HEK293 (cell line): ENCODE measurements at regions of chr1 and their contacts with region 1.

Region 1: DNA sequence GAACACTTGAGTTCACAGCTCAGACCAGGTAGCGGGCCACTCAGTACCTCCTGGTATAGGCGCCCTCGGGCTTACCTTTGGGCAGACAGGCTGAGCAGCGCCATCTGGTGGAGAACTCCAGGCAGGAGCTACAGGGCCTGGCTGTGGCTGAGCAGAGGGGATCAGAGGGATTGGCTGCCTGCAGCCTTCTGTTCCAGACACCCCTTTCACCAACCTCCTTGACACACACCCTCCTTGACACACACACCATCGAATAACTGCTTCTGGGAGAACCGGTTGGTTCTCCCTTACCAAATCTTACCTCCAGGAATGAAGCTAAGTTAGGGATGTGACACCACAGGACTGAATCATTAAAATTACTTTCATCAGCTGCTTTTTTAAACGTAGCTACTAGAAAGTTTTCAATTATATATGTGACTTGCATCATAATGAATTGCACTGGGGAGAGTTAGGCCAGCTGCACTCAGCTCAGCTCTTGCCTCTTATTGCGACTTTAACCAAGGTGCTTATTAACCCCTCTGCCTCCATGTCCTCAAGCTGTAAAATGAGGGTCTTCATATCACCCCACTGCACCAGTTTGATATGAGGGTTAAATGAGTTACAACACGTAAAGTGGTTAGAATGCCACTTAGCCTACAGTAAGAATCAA is 6.6 kb downstream of the LIN28A start:
- H3K4me3 ChIP-seq: no peak overlapping the region
- H3K27ac ChIP-seq: no peak overlapping the region
- H3K4me1 ChIP-seq: no peaks in the 10 kb centered on the region
- CTCF ChIP-seq: peak; percentile 70

Region 2: DNA sequence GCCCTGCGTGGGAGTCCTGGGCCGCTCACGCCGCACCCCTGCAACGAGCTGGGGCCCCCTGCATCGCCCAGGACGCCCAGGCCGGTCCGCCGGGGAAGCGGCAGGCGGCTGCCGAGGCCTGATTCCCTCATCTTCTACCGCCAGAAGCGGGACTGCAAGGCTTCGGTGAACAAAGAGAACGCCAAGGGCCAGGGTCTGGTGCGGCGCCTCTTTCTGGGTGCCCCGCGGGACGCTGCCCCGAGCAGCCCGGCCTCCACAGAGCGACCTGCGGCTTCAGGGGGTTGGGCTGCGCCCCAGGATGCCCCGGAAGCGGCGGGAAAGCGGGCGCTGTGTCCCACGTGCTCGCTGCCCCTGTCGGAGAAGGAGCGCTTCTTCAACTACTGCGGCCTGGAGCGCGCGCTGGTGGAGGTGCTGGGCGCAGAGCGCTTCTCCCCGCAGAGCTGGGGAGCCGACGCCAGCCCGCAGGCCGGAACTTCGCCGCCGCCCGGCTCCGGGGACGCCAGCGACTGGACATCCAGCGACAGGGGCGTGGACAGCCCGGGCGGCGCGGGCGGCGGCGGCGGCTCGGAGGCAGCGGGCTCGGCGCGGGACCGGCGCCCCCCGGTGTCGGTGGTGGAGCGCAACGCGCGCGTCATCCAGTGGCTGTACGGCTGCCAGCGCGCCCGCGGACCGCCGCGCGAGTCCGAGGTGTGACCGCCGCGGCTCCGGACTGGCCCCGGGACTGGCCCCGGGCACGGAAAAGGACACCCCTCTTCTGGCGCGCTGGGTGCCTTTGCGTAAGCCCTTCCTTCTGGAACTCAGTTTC is 255.6 kb before region 1 on chr1:
- CTCF ChIA-PET with region 1: no interaction called
- POLR2A ChIA-PET with region 1: no interaction called
- H3K4me3 ChIP-seq: peak overlapping the region; percentile 12; the same call in 1 of the 2 replicates
- H3K27ac ChIP-seq: peak overlapping the region; percentile 45; the same call in 1 of the 2 replicates
- H3K4me1 ChIP-seq: no peaks in the 10 kb centered on the region; the same call in 1 of the 2 replicates
- CTCF ChIP-seq: no peak

Region 3: GRCh38 chr1:26284597-26285360 is 132.5 kb before region 1 on chr1:
- CTCF ChIA-PET with region 1: interaction called, 42 read pairs
- POLR2A ChIA-PET with region 1: interaction called, 4 read pairs
- H3K4me3 ChIP-seq: no peak overlapping the region
- H3K27ac ChIP-seq: no peak overlapping the region
- H3K4me1 ChIP-seq: no peaks in the 10 kb centered on the region
- CTCF ChIP-seq: peak; percentile 70

Region 4: DNA sequence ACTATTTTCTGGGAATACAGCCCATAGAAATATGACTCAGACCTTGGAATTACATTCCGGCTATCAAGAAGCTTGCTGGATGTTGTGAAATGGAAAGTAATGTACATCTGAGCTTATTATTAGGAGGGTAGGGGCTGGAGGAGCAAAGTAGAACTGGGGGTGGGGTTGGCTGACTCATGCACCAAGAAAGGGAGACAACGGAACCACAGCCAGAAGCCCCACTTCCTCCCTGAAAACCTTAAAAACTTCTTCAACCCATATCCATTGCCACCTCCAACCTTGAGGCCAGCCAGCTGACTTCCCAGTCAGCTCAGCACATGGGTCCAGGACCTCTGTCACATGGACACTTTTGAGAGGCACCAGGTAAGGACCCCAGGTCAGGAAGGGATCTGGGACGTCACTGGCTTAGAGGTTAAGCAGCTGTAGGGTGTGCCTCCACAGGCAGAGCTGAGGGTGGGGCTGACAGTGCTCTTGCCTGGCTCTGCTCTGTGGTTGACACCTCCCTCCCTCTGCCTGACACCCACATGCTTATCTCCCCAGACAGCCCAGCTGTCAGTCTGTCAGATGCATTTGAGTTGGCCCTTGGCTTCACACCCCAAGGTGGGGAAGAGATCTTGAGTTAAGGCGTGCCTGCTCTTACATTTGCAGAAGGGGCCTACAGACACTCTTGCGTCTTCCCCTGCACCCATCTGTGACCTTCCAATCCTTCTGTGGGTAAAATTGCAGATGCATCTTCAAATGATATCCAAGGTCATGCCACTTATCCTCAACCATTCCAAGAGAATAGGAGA is 39.0 kb before region 1 on chr1:
- CTCF ChIA-PET with region 1: interaction called, 24 read pairs
- POLR2A ChIA-PET with region 1: no interaction called
- H3K4me3 ChIP-seq: no peak overlapping the region
- H3K27ac ChIP-seq: no peak overlapping the region
- H3K4me1 ChIP-seq: no peaks in the 10 kb centered on the region
- CTCF ChIP-seq: no peak

Region 5: GRCh38 chr1:26431979-26432695 is 14.9 kb after region 1 on chr1 and contains the start of gene DHDDS:
- CTCF ChIA-PET with region 1: interaction called, 53 read pairs
- POLR2A ChIA-PET with region 1: interaction called, 8 read pairs
- H3K4me3 ChIP-seq: peak within 1 kb of the TSS; percentile 64
- H3K27ac ChIP-seq: peak within 1 kb of the TSS; percentile 1; the same call in 1 of the 2 replicates
- H3K4me1 ChIP-seq: peaks cover 5% of the 10 kb centered on the region
- CTCF ChIP-seq: no peak

Region 6: DNA sequence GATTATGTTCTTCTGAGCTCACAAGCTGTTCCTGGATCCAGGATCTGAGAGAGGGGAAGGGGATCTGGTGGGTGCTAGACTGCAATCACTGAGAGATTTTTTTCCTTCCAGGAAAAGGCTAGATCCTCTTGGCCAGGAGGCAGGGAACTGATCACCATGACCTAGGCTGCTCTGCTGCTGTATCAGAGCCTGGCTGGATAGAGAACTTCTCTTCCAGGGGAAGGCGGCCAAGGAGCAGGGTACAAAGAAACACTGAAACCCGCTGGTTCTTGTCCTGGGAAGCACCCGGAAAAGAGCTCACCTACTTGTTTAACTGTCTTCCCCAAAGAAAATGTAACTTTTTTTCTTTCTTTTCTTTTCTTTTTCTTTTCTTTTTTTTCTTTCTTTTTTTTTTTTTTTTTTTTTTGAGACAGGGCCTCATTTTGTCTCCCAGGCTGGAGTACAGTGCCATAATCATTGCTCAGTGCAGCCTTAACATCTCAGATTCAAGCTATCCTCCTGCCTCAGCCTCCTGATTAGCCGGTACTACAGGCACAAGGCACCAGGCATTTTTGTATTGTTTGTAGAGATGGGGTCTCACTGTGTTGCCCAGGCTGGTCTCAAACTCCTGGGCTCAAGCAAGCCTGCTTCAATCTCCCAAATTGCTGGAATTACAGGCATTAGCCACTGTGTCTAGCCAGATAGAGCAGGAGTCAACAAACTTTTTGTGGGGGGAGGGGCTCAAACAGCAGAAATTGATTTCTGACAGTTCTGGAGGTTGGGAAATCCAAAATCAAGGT is 99.9 kb after region 1 on chr1:
- CTCF ChIA-PET with region 1: no interaction called
- POLR2A ChIA-PET with region 1: no interaction called
- H3K4me3 ChIP-seq: no peak overlapping the region
- H3K27ac ChIP-seq: no peak overlapping the region
- H3K4me1 ChIP-seq: no peaks in the 10 kb centered on the region
- CTCF ChIP-seq: no peak